Naive thymus-derived CD4-positive, alpha-beta T cell (primary cell): ENCODE measurements at regions of chr17 and their contacts with region 1.

Region 1: GRCh38 chr17:55421179-55421934 is at the start of gene MMD:
- DNase-seq: peak in 6 of 9 donors; percentile 12 to 50 (median 24)
- ATAC-seq: no peak
- H3K4me3 ChIP-seq: peak within 1 kb of the TSS; percentile 89
- H3K4me3 Mint-ChIP-seq: peak within 1 kb of the TSS; percentile 89 to 96 (median 90)
- H3K27ac ChIP-seq: peak within 1 kb of the TSS; percentile 87
- H3K27ac Mint-ChIP-seq: peak within 1 kb of the TSS; percentile 83 to 98 (median 94)
- H3K4me1 ChIP-seq: peaks cover 11 to 21% of the 10 kb centered on the region in 2 donors
- H3K4me1 Mint-ChIP-seq: peaks cover 32 to 47% (median 43%) of the 10 kb centered on the region in 7 donors
- H3K27me3 ChIP-seq: no peaks in the 10 kb centered on the region
- H3K27me3 Mint-ChIP-seq: peaks cover 8 to 30% (median 19%) of the 10 kb centered on the region in 5 donors
- total RNA-seq, gene MMD: 6.6 to 35.3 (median 11.2) TPM

Region 2: DNA sequence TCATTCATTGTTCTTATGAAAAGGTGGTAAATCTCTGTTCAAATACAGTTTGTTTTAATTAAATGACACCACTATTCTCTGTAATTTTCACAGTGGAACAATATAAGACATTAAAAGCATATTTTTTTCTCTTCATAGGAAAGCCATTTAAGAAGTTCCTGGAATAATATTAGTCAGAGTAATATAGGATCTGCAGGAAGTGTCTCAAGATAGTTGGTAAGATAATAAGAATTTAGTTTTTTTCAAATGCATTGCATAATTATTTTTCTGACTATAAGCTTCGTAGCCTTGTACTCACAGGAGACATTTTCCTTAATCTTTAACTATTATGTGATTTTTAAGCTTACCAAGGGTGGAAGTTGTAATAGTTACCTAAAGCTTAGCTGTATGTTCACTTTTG is 435.9 kb before region 1 on chr17:
- CTCF ChIA-PET with region 1: no interaction called
- POLR2A ChIA-PET with region 1: no interaction called
- intact Hi-C with region 1: loop called in 1 of 2 experiments (anchors 5 kb)
- DNase-seq: no peak
- ATAC-seq: no peak
- H3K4me3 ChIP-seq: no peak overlapping the region
- H3K4me3 Mint-ChIP-seq: no peak overlapping the region
- H3K27ac ChIP-seq: no peak overlapping the region
- H3K27ac Mint-ChIP-seq: no peak overlapping the region
- H3K4me1 ChIP-seq: no peaks in the 10 kb centered on the region
- H3K4me1 Mint-ChIP-seq: peaks cover 0 to 4% (median 0%) of the 10 kb centered on the region in 7 donors
- H3K27me3 ChIP-seq: no peaks in the 10 kb centered on the region
- H3K27me3 Mint-ChIP-seq: no peaks in the 10 kb centered on the region

Region 3: DNA sequence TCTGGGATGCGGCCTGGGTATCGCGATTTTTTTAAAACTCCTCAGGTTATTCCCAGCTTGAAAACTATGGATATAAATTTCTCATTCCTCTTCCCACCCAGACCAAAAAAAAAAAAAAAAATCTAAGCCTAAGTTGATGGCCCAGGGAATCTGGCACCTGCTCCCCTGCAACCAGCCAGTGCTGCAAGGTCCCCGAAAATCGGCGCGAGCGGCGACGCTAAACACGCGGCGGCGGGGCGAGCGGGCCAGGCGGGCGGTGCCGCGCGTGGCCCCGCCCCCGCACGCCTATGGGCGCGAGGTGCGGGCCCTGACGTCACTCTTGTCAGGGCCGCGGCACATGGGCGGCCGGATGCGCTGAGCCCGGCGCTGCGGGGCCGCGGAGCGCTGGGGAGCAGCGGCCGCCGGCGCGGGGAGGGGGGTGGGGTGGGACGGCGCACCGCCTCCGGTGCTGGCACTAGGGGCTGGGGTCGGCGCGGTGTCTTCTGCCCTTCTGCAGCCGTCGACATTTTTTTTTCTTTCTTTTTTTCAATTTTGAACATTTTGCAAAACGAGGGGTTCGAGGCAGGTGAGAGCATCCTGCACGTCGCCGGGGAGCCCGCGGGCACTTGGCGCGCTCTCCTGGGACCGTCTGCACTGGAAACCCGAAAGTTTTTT is 156.6 kb before region 1 on chr17 and contains the start of gene HLF:
- CTCF ChIA-PET with region 1: no interaction called
- POLR2A ChIA-PET with region 1: no interaction called
- intact Hi-C with region 1: loop called (anchors 1 kb)
- DNase-seq: peak; percentile 34 to 78 (median 68)
- ATAC-seq: peak; percentile 96
- H3K4me3 ChIP-seq: peak within 1 kb of the TSS; percentile 58
- H3K4me3 Mint-ChIP-seq: peak within 1 kb of the TSS; percentile 74 to 85 (median 80)
- H3K27ac ChIP-seq: no peak within 1 kb of the TSS
- H3K27ac Mint-ChIP-seq: peak within 1 kb of the TSS in 2 of 9 donors; percentile 41 to 49
- H3K4me1 ChIP-seq: peaks cover 15% of the 10 kb centered on the region in 2 donors
- H3K4me1 Mint-ChIP-seq: peaks cover 8 to 37% (median 21%) of the 10 kb centered on the region in 7 donors
- H3K27me3 ChIP-seq: peaks cover 13 to 29% of the 10 kb centered on the region in 2 donors
- H3K27me3 Mint-ChIP-seq: peaks cover 50 to 90% (median 72%) of the 10 kb centered on the region in 5 donors
- total RNA-seq, gene HLF: 0.19 to 2.6 (median 0.48) TPM

Region 4: GRCh38 chr17:55356434-55357328 is 64.7 kb before region 1 on chr17:
- CTCF ChIA-PET with region 1: no interaction called
- POLR2A ChIA-PET with region 1: no interaction called
- intact Hi-C with region 1: loop called in 1 of 2 experiments (anchors 2 kb)
- DNase-seq: peak in 8 of 9 donors; percentile 18 to 62 (median 48)
- ATAC-seq: peak; percentile 87
- H3K4me3 ChIP-seq: no peak overlapping the region
- H3K4me3 Mint-ChIP-seq: no peak overlapping the region
- H3K27ac ChIP-seq: no peak overlapping the region
- H3K27ac Mint-ChIP-seq: no peak overlapping the region
- H3K4me1 ChIP-seq: no peaks in the 10 kb centered on the region
- H3K4me1 Mint-ChIP-seq: peaks cover 0 to 11% (median 2%) of the 10 kb centered on the region in 7 donors
- H3K27me3 ChIP-seq: no peaks in the 10 kb centered on the region
- H3K27me3 Mint-ChIP-seq: peaks cover 14 to 41% (median 15%) of the 10 kb centered on the region in 5 donors

Region 5: DNA sequence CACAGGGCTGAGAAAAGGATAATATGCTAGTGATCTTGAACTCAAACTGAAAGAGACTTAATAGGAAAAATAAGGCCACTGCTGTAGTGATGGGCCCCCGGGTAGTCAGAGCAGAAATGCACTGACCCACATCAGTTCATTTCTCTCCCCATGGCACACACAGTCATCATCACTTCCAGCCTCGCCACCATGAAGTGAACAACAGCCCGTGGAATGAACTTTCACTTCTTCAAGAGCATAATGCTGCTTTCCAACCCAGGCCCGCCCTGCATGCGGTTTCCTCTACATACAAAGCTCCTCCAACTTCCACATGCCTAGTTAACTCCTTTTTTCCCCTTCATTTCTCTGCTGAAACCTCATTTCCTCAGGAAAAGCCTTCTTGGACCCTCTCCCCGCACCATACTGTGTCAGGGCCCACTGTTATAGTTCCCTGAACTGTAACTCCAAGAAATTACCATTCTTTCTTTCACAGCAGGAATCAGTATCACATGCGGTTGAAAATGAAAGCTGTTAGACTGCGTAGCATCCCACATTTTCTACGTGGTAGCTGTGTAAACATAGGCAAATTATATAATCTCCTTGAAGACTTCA is 155.7 kb after region 1 on chr17:
- CTCF ChIA-PET with region 1: no interaction called
- POLR2A ChIA-PET with region 1: interaction called, 3 read pairs
- intact Hi-C with region 1: loop called (anchors 10 kb)
- DNase-seq: peak in 8 of 9 donors; percentile 11 to 56 (median 50)
- ATAC-seq: peak; percentile 88
- H3K4me3 ChIP-seq: peak overlapping the region; percentile 49
- H3K4me3 Mint-ChIP-seq: no peak overlapping the region
- H3K27ac ChIP-seq: peak overlapping the region; percentile 60
- H3K27ac Mint-ChIP-seq: no peak overlapping the region
- H3K4me1 ChIP-seq: peaks cover 0 to 16% of the 10 kb centered on the region in 2 donors
- H3K4me1 Mint-ChIP-seq: peaks cover 0 to 10% (median 0%) of the 10 kb centered on the region in 7 donors
- H3K27me3 ChIP-seq: no peaks in the 10 kb centered on the region
- H3K27me3 Mint-ChIP-seq: peaks cover 0 to 13% (median 0%) of the 10 kb centered on the region in 5 donors

Region 6: GRCh38 chr17:56833809-56834379 is 1412.5 kb after region 1 on chr17 and contains the starts of genes C17orf67 and DGKE:
- CTCF ChIA-PET with region 1: no interaction called
- POLR2A ChIA-PET with region 1: no interaction called
- intact Hi-C with region 1: loop called in 1 of 2 experiments (anchors 5 kb)
- DNase-seq: peak; percentile 95 to 100 (median 98)
- ATAC-seq: peak; percentile 97
- H3K4me3 ChIP-seq: peak within 1 kb of the TSS; percentile 91
- H3K4me3 Mint-ChIP-seq: peak within 1 kb of the TSS; percentile 91 to 98 (median 95)
- H3K27ac ChIP-seq: peak within 1 kb of the TSS; percentile 85
- H3K27ac Mint-ChIP-seq: peak within 1 kb of the TSS; percentile 83 to 95 (median 93)
- H3K4me1 ChIP-seq: peaks cover 41 to 42% of the 10 kb centered on the region in 2 donors
- H3K4me1 Mint-ChIP-seq: peaks cover 34 to 74% (median 62%) of the 10 kb centered on the region in 7 donors
- H3K27me3 ChIP-seq: no peaks in the 10 kb centered on the region
- H3K27me3 Mint-ChIP-seq: no peaks in the 10 kb centered on the region
- total RNA-seq, gene C17orf67: 3.6 to 9.1 (median 5.4) TPM
- total RNA-seq, gene DGKE: 23.7 to 39.2 (median 35.6) TPM